CD4-positive, alpha-beta memory T cell (primary cell): ENCODE measurements at regions of chr14 and their contacts with region 1.

Region 1: DNA sequence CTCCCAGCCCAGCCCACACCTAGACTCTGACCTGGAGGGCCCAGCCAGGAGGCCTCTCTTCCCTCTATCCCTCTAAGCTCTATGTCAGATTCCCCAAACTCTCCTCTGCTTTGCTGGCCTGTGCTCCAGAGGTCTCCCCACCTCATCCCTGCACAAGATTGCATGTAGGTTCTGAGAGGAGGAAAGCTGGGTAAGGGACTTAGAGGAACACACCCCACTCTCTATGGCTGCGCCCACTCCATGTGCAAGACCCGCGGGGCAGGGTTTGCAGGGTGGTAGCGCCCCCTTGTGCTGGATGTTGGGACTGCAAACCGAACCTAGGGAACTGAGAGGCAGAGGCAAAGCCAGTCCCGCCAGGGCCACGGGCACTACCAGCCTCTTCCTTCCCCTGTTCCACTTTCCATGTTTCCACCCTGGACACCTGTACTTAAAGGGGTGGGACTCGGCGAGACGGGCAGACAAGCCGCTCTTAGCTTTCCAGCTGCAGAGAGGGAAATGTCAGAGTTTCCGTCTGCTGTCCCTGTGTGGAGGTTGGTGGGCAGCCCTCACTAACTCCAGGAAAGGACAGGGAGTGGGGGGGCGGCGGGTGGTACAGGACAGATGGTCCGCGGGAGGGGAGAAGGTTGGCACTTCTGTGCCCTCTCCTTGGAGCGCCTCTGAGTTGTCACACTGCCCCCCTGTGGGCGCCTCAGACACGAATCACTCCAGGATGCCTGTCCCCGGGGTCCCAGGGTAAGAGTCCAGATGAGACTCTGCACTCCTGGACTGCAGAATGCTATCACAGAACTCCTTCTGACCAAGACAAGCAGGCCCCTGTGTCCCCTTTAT is 16.8 kb downstream of the MMP14 start:
- DNase-seq: peak; percentile 81 to 86 (median 83)
- H3K4me3 ChIP-seq: peak overlapping the region; percentile 72 to 77
- H3K4me3 Mint-ChIP-seq: peak overlapping the region; percentile 84 to 89 (median 86)
- H3K27ac ChIP-seq: peak overlapping the region; percentile 34
- H3K27ac Mint-ChIP-seq: peak overlapping the region; percentile 52 to 83 (median 75)
- H3K4me1 ChIP-seq: peaks cover 13% of the 10 kb centered on the region
- H3K4me1 Mint-ChIP-seq: peaks cover 6 to 20% (median 13%) of the 10 kb centered on the region in 4 donors
- H3K27me3 ChIP-seq: no peaks in the 10 kb centered on the region
- H3K27me3 Mint-ChIP-seq: peaks cover 5 to 9% of the 10 kb centered on the region in 2 donors

Region 2: DNA sequence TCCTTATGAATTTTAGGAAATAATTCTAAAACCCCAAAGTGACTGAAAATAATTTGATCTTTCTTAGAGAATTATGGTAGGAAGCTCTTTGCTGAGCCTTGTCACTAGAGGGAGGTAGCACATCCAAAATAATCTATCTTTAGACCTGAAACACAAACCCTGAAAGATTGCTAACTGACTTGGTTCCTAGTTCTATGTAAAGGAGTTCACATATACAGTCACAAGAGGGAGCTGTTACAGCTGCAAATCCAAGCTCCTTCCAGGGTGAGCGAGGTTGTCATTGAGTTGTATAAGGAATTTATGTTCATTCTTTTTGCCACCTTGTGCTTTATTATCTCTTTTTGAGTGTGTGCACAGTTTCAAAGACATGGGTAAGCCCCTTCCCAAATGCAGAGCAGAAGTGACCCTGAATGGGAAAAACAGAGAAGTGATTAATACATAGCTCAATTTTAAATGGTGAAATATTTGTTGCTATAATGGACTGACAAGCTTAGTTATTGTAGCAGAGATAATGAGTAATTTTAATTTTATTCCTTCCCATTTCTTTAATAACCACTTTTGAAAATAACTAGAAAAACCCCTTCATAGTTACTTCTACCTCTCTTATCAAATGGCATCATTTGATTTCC is 652.1 kb before region 1 on chr14:
- CTCF ChIA-PET with region 1: no interaction called
- POLR2A ChIA-PET with region 1: no interaction called
- intact Hi-C with region 1: loop called (anchors 5 kb)
- DNase-seq: peak in 4 of 5 donors; percentile 28 to 43 (median 34)
- H3K4me3 ChIP-seq: no peak overlapping the region
- H3K4me3 Mint-ChIP-seq: peak overlapping the region in 2 of 8 donors; percentile 39 to 58
- H3K27ac ChIP-seq: no peak overlapping the region
- H3K27ac Mint-ChIP-seq: peak overlapping the region in 1 of 7 donors; percentile 52
- H3K4me1 ChIP-seq: no peaks in the 10 kb centered on the region
- H3K4me1 Mint-ChIP-seq: peaks cover 0 to 4% (median 1%) of the 10 kb centered on the region in 4 donors
- H3K27me3 ChIP-seq: no peaks in the 10 kb centered on the region
- H3K27me3 Mint-ChIP-seq: no peaks in the 10 kb centered on the region

Region 3: DNA sequence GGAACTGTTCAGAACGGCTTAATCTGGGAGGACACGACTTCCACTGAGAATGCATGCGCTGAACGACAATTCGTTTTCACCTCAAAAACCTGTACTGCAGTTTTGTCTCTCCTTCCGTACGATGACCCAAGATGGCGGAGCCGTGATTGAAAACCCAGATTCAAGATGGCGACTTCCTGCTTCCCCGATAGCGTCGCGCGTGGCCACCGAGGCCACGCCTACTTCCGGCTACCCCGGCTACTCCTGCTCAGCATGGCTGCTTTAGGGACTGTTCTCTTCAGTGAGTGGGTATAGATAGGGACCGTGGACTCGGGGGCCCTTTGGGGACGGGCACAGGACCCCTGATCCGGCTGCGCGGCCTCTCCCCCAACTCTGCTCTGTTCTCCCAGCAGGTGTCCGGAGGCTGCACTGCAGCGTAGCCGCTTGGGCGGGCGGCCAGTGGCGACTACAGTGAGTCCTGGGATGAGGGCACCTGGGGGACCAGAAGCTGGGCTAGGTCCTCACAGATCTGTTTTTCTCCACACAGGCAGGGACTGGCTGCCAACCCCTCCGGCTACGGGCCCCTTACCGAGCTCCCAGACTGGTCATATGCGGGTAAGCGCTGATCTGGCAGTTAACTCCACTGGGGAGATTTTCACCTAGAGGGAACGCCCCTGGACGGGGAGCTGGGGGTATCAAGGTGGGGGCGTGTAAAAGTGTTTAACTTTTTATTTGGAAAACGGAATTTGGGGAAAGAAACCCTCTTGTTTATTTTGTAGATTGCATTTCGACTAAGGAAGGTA is 23.3 kb before region 1 on chr14 and contains the start of gene MRPL52:
- CTCF ChIA-PET with region 1: interaction called, 403 read pairs
- POLR2A ChIA-PET with region 1: interaction called, 3 read pairs
- intact Hi-C with region 1: no loop called
- DNase-seq: peak; percentile 86 to 93 (median 88)
- H3K4me3 ChIP-seq: peak within 1 kb of the TSS; percentile 80 to 85
- H3K4me3 Mint-ChIP-seq: peak within 1 kb of the TSS; percentile 91 to 96 (median 92)
- H3K27ac ChIP-seq: peak within 1 kb of the TSS; percentile 85
- H3K27ac Mint-ChIP-seq: peak within 1 kb of the TSS; percentile 96 to 99 (median 98)
- H3K4me1 ChIP-seq: peaks cover 18% of the 10 kb centered on the region
- H3K4me1 Mint-ChIP-seq: peaks cover 17 to 32% (median 24%) of the 10 kb centered on the region in 4 donors
- H3K27me3 ChIP-seq: no peaks in the 10 kb centered on the region
- H3K27me3 Mint-ChIP-seq: peaks cover 0 to 1% of the 10 kb centered on the region in 2 donors
- total RNA-seq, gene MRPL52: 58.0 to 68.3 TPM

Region 4: DNA sequence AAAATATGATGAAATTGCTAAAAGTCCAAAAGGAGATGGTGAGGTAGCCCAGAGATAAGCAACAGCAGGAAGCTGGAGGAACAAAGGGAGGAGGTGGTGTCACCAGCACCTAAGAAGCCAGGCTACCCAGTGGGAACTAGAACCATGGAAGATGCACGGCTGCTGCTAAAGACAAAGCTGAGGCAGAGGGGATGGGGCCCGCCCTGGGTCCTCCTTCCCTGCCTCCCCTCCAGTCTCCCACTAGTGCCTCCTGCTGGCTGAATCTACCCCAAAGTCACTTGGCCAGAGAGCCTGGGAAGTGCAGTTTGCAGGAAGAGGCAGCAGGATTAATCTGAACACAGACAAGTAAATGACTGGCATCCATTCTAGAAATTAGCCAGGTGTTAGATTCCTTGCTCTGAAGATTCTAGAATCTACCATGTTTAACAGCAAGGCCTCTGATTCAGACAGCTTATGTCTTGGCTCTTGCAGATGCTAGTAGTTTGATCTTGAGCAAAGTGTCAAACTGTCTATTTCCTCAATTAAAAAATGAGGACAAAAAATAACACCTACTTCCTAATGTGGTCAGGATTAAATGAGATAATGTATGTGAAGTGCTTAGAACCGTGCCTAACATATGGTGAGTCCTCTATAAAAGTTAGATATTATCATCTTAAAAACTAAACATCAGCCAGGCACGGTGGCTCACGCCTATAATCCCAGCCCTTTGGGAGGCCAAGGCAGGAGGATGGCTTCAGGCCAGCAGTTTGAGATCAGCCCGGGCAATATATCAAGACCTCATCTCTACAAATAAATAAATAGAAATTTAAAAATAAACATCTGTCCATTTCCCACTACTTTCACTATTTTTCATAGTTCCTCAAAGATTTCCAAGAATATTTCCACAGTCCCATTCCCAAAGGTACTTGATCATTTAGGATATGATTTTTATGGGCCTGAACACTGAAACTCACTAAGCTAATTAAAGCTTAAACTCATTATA is 12.6 kb after region 1 on chr14:
- CTCF ChIA-PET with region 1: interaction called, 72 read pairs
- POLR2A ChIA-PET with region 1: interaction called, 22 read pairs
- intact Hi-C with region 1: no loop called
- DNase-seq: peak in 1 of 5 donors; percentile 9
- H3K4me3 ChIP-seq: no peak overlapping the region
- H3K4me3 Mint-ChIP-seq: no peak overlapping the region
- H3K27ac ChIP-seq: no peak overlapping the region
- H3K27ac Mint-ChIP-seq: peak overlapping the region in 2 of 7 donors; percentile 77 to 87
- H3K4me1 ChIP-seq: peaks cover 19% of the 10 kb centered on the region
- H3K4me1 Mint-ChIP-seq: peaks cover 9 to 32% (median 16%) of the 10 kb centered on the region in 4 donors
- H3K27me3 ChIP-seq: no peaks in the 10 kb centered on the region
- H3K27me3 Mint-ChIP-seq: peaks cover 0 to 2% of the 10 kb centered on the region in 2 donors

Region 5: GRCh38 chr14:22886500-22887259 is 33.5 kb after region 1 on chr14:
- CTCF ChIA-PET with region 1: interaction called, 57 read pairs
- POLR2A ChIA-PET with region 1: interaction called, 4 read pairs
- intact Hi-C with region 1: no loop called
- DNase-seq: peak; percentile 73 to 85 (median 78)
- H3K4me3 ChIP-seq: peak overlapping the region; percentile 24 to 30
- H3K4me3 Mint-ChIP-seq: peak overlapping the region; percentile 87 to 97 (median 94)
- H3K27ac ChIP-seq: peak overlapping the region; percentile 68
- H3K27ac Mint-ChIP-seq: peak overlapping the region; percentile 93 to 99 (median 97)
- H3K4me1 ChIP-seq: peaks cover 57% of the 10 kb centered on the region
- H3K4me1 Mint-ChIP-seq: peaks cover 34 to 85% (median 59%) of the 10 kb centered on the region in 4 donors
- H3K27me3 ChIP-seq: no peaks in the 10 kb centered on the region
- H3K27me3 Mint-ChIP-seq: no peaks in the 10 kb centered on the region

Region 6: GRCh38 chr14:22918804-22919600 is 65.8 kb after region 1 on chr14 and contains the start of gene RBM23:
- CTCF ChIA-PET with region 1: interaction called, 10 read pairs
- POLR2A ChIA-PET with region 1: interaction called, 3 read pairs
- intact Hi-C with region 1: no loop called
- DNase-seq: peak; percentile 99 to 100 (median 100)
- H3K4me3 ChIP-seq: peak within 1 kb of the TSS; percentile 67 to 93
- H3K4me3 Mint-ChIP-seq: peak within 1 kb of the TSS; percentile 94 to 99 (median 96)
- H3K27ac ChIP-seq: peak within 1 kb of the TSS; percentile 98
- H3K27ac Mint-ChIP-seq: peak within 1 kb of the TSS; percentile 99 to 100 (median 100)
- H3K4me1 ChIP-seq: peaks cover 40% of the 10 kb centered on the region
- H3K4me1 Mint-ChIP-seq: peaks cover 13 to 56% (median 33%) of the 10 kb centered on the region in 4 donors
- H3K27me3 ChIP-seq: no peaks in the 10 kb centered on the region
- H3K27me3 Mint-ChIP-seq: peaks cover 0 to 4% of the 10 kb centered on the region in 2 donors
- total RNA-seq, gene RBM23: 119 to 123 TPM